HEK293 (cell line): ENCODE measurements at regions of chr20 and their contacts with region 1.

Region 1: DNA sequence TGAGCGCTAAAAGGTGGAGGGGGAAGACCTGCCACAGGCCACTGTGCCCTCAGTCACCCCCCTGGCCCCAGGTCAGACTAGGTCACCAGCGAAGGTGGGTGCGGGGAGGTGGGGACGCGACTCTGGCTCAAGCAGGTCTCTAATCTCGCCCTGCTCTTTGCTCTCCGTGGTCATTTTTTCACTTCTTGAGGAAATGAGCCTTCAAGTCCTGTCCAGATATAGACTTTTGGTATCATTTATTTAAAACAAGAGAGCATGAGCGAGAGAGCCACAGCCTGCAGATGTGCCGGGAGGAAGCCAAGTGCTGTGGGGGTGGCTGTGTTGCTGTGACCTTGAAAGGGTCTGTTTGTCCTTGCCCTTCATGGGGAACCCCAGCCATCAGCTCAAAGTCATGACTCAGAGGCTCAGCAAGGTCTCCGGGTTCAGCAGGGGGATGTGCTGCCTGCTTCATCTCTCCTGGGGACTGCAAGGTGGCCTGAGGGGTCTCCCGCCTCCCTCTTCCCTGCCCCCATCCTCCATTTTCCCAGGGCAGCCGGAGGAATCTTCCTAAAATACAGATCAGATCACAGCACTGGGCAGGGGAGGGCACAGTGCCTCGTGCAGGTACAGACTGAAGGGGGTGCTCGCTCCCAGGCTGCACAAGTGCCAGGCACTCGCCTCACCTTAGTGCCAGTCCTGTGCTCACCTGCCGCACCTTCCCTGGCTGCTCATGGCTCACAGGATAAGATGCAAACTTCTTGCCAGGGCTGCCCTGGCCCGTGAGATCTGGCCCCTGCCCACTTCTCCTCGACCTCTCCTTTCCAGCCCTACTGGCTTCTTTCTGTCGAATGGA is 26.5 kb downstream of the SULF2 start:
- H3K4me3 ChIP-seq: no peak overlapping the region
- H3K27ac ChIP-seq: no peak overlapping the region
- H3K4me1 ChIP-seq: no peaks in the 10 kb centered on the region
- CTCF ChIP-seq: no peak

Region 2: DNA sequence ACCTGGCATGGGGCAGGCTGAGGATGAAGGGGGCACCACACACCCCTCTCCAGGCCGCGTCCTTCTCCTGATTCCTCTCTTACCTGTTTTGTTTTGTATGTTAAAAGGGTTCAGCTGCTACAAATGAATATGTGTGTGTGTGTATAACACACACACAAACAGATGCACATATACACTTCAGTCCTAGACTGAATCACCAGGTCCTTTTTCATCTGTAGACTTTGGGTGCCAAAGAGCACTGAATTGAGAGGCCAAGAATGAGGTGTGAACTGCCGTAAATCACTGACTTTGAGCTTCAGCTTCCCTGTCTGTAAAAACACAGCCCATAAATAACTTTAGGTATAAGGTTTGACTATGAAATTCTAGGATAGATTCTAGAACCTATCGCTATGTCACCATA is 13.9 kb before region 1 on chr20:
- CTCF ChIA-PET with region 1: interaction called, 10 read pairs
- POLR2A ChIA-PET with region 1: no interaction called
- H3K4me3 ChIP-seq: no peak overlapping the region
- H3K27ac ChIP-seq: no peak overlapping the region
- H3K4me1 ChIP-seq: peaks cover 3% of the 10 kb centered on the region; the same call in 1 of the 2 replicates
- CTCF ChIP-seq: no peak

Region 3: DNA sequence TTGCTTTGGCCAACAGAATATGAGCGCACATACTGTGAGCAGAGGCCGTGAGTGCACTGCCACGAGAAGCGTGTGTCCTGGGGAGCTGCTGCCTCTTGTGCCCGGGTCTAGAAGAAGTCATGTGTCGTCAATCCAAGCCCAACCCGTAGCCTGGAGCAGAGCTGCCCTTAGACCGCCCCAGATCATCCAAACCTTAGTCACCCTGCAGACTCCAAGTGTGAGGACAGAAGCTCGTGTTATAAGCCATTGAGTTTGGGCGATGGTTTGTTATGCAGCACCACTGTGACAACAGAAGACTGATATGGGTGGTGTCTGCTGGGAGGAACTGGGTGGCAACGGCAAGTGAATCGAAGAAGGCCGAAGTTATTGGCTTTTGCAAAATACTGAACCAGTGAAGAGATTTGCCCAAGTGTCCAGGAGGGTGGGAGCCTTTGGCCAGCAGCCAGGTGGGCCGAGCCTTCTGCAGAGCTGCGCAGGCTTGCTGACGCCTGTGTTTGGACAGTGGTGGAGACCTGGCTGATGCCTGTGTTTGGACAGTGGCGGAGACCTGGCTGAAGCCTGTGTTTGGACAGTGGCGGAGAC is 127.8 kb after region 1 on chr20:
- CTCF ChIA-PET with region 1: no interaction called
- POLR2A ChIA-PET with region 1: no interaction called
- H3K4me3 ChIP-seq: no peak overlapping the region
- H3K27ac ChIP-seq: no peak overlapping the region
- H3K4me1 ChIP-seq: no peaks in the 10 kb centered on the region
- CTCF ChIP-seq: no peak